ENCODE measurements at regions of chr12 and their contacts with region 1.

Region 1: DNA sequence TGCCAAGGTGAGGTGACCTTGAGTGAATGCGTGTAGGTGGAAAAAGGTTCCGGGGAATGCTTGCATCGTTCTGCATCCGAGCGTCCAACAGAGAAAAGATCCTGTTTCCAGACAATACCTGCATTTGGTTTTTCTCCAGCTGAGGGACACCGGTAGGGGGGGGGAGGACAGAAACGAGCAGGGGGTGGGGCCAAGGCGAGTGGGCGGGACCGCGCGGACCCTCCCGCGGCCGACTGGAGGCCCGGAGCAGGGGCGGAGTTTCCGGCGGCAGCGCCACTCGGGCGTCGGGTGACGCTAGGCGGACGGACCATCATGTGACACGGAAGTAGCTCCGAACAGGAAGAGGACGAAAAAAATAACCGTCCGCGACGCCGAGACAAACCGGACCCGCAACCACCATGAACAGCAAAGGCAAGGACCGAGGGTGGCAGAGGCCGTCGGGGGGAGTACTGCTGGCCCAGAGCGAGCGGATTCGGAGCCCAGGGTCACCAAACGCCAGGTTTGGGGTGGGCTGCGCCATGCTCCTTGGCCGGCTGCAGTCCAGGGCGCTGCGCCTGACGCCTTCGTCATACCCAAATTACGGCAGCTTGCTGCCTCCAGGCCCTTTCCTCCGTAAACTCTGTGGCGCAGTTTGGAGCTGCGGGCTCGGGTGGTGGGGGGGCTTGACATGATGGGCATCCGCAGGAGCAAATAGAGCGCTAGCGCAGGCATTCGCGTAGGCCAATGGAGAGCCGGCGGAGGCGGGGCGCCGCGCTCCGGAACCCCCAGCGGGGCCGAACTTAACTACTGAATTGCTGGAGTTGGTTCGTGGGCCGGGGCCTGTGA is at the start of gene DAZAP2:
- DNase-seq: peak; percentile 89 to 94
- H3K4me3 ChIP-seq: peak within 1 kb of the TSS; percentile 94
- H3K27ac ChIP-seq: peak within 1 kb of the TSS; percentile 97
- H3K4me1 ChIP-seq: peaks cover 20% of the 10 kb centered on the region
- H3K27me3 ChIP-seq: no peaks in the 10 kb centered on the region
- CTCF ChIP-seq: no peak
- total RNA-seq, gene DAZAP2: 84.4 and 154 TPM in 2 replicates

Region 2: DNA sequence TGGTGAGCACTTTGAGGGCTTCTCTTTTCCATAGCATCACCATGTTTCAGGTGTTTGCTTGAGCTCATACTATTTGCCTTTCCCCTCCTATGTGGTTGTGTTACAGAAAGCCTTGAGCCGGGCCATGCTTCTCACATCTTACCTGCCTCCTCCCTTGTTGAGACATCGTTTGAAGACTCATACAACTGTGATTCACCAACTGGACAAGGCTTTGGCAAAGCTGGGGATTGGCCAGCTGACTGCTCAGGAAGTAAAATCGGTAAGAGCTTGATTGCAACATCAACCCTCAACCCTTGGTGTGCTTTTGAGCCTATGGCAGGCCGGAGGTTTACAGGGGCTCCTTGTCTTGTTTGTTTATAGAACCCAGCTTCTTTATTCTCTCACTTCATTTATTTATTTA is 182.5 kb before region 1 on chr12:
- CTCF ChIA-PET with region 1: no interaction called
- POLR2A ChIA-PET with region 1: interaction called, 12 read pairs
- intact Hi-C with region 1: no loop called
- DNase-seq: peak in 1 of 2 experiments; percentile 71
- H3K4me3 ChIP-seq: no peak overlapping the region
- H3K27ac ChIP-seq: no peak overlapping the region
- H3K4me1 ChIP-seq: no peaks in the 10 kb centered on the region; the same call in 1 of the 2 replicates
- H3K27me3 ChIP-seq: no peaks in the 10 kb centered on the region
- CTCF ChIP-seq: no peak

Region 3: GRCh38 chr12:51118706-51119105 is 120.0 kb before region 1 on chr12:
- CTCF ChIA-PET with region 1: no interaction called
- POLR2A ChIA-PET with region 1: no interaction called
- intact Hi-C with region 1: loop called (anchors 5 kb)
- DNase-seq: peak; percentile 21 to 88
- H3K4me3 ChIP-seq: no peak overlapping the region
- H3K27ac ChIP-seq: 0 out of 2 replicates have a peak overlapping the region, but pooled peaks have one; percentile 4
- H3K4me1 ChIP-seq: peaks cover 10% of the 10 kb centered on the region; the same call in 1 of the 2 replicates
- H3K27me3 ChIP-seq: no peaks in the 10 kb centered on the region
- CTCF ChIP-seq: no peak

Region 4: DNA sequence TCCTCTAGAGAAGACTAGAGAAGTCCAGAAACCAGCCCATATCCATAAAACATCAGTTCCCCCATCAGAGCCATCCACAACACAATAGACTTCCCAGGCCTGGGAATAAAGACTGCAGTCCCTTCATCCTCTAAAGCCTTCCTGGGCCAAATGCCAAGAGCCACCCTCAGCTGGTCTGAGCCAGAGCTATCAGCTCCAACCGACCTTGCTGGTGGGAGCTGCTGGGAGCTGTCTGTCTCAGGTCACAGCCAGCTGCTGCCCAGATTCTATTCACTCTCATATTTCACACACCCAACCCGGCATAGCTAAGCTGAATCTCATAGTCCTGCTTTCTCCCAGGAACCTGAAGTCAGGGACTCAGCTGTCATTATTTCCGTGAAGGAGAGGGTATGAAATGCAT is 54.9 kb before region 1 on chr12:
- CTCF ChIA-PET with region 1: no interaction called
- POLR2A ChIA-PET with region 1: no interaction called
- intact Hi-C with region 1: no loop called
- DNase-seq: peak in 1 of 2 experiments; percentile 15
- H3K4me3 ChIP-seq: no peak overlapping the region
- H3K27ac ChIP-seq: no peak overlapping the region
- H3K4me1 ChIP-seq: no peaks in the 10 kb centered on the region
- H3K27me3 ChIP-seq: no peaks in the 10 kb centered on the region
- CTCF ChIP-seq: no peak

Region 5: DNA sequence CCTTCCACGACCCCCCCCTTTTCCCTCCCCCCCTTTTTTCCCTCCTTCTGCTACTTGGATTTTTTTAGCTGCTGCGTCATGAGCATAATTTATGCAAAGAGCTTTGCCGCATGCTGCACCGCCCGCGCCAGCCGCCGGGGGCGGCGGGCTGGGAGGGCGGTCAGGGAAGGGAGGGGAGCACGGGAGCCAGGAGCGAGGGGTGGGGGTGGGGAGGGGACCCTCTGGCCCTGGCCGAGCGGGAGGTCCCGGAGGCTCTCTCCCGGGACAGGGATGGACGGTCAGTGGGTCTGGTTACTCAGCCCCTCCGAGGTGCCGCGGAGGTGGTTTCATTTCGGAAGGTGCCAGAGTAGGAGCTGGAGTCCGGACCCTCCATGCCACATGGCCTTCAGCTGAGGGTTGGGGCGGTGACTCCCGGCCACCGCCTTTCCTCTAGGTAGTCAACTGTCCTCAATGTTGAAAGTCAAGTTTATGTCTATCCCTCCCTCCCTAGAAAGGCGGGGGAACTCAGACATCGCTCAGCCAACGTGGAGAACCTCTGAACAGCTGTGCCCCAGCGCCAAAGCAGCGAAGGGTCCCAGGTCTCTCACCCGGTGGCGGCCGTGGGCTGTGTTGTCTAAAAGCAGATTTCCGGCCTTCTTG is 20.6 kb before region 1 on chr12 and contains the start of gene POU6F1:
- CTCF ChIA-PET with region 1: interaction called, 5 read pairs
- POLR2A ChIA-PET with region 1: interaction called, 11 read pairs
- intact Hi-C with region 1: no loop called
- DNase-seq: peak; percentile 62 to 63
- H3K4me3 ChIP-seq: peak within 1 kb of the TSS; percentile 70
- H3K27ac ChIP-seq: no peak within 1 kb of the TSS
- H3K4me1 ChIP-seq: peaks cover 9% of the 10 kb centered on the region
- H3K27me3 ChIP-seq: no peaks in the 10 kb centered on the region
- CTCF ChIP-seq: peak; percentile 69
- total RNA-seq, gene POU6F1: 5.3 and 7.0 TPM in 2 replicates

Region 6: DNA sequence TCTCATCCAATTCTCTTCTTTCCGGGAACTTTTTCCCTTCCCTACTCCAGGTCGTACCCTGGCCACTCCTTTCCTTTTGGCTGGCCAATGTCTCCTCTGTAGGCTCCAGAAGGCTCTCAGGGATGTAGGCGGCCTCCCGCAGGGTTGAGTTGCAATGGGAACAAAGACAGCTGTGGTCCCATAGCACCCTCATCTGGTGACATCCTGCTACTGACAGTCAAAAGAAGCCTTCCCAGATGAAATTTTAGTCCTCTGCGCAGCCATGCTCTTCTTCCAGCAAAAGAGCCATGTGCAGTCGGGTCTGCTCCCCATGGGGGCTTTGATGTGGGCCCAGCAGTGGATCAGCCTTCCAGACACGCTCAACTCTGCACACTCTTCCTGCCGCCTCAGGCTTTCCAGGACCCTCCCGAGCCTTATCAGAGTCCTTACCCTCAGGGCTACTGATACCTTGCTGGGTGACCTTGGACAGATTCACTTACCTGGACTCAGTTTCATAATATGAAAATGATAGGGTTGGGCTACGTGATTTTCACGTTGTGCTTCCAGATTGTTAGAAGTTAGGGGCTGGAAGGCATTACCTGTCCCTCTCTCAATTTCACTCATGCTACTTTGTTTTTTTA is 113.3 kb after region 1 on chr12:
- CTCF ChIA-PET with region 1: no interaction called
- POLR2A ChIA-PET with region 1: interaction called, 12 read pairs
- intact Hi-C with region 1: no loop called
- DNase-seq: peak in 1 of 2 experiments; percentile 55
- H3K4me3 ChIP-seq: no peak overlapping the region
- H3K27ac ChIP-seq: no peak overlapping the region
- H3K4me1 ChIP-seq: no peaks in the 10 kb centered on the region
- H3K27me3 ChIP-seq: no peaks in the 10 kb centered on the region
- CTCF ChIP-seq: peak; percentile 72

Measured in PC-9 (cell line).